AG04450 (cell line): ENCODE measurements at regions of chr21 and their contacts with region 1.

Region 1: GRCh38 chr21:42991992-42992740 is 17.8 kb downstream of the PKNOX1 start:
- DNase-seq: peak; percentile 91
- H3K4me3 ChIP-seq: no peak overlapping the region
- H3K27ac ChIP-seq: peak overlapping the region; percentile 98
- H3K27me3 ChIP-seq: no peaks in the 10 kb centered on the region
- CTCF ChIP-seq: no peak

Region 2: DNA sequence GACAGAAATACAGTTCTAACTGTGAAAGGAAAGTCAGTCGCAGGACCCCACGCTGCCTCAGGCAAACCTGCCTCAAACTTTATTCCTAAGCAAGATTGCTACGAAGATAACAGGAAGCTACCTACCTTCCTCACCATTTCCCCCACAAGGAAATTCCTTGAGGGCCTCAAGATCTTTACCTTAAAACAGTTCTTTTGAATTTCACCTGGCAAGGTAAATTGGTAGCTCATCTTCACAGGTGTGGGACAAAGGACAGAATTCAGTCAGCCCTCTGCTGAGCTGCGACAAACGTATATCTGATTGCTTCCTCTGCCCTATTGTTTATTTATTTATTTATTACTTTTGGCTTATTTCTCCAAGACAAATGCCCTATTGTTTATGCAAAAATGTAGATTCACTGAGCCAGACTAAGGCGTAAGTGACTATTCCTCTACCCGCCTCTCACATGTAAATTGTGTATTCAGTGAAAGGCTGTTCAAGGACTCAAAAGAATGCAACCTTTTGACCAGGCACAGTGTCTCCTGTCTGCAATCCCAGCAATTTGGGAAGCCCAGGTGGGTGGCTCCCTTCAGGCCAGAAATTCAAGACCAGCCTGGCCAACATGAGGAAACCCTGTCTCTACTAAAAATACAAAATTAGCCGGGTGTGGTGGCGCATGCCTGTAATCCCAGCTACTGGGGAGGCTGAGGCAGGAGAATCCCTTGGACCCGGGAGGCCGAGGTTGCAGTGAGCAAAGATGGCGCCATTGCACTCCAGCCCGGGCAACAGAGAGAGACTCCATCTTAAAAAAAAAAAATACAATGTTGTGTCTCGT is 35.1 kb before region 1 on chr21:
- CTCF ChIA-PET with region 1: no interaction called
- POLR2A ChIA-PET with region 1: no interaction called
- DNase-seq: no peak
- H3K4me3 ChIP-seq: no peak overlapping the region
- H3K27ac ChIP-seq: no peak overlapping the region
- H3K27me3 ChIP-seq: peaks cover 2% of the 10 kb centered on the region
- CTCF ChIP-seq: no peak

Region 3: GRCh38 chr21:42973991-42974831 is 18.0 kb before region 1 on chr21 and contains the start of gene PKNOX1:
- CTCF ChIA-PET with region 1: interaction called, 3 read pairs
- POLR2A ChIA-PET with region 1: interaction called, 11 read pairs
- DNase-seq: peak; percentile 97
- H3K4me3 ChIP-seq: peak within 1 kb of the TSS; percentile 87
- H3K27ac ChIP-seq: peak within 1 kb of the TSS; percentile 90
- H3K27me3 ChIP-seq: peaks cover 1% of the 10 kb centered on the region
- CTCF ChIP-seq: no peak
- polyA plus RNA-seq, gene PKNOX1: 57.4 and 65.6 TPM in 2 replicates